ENCODE measurements at regions of chr1 and their contacts with region 1.

Region 1: DNA sequence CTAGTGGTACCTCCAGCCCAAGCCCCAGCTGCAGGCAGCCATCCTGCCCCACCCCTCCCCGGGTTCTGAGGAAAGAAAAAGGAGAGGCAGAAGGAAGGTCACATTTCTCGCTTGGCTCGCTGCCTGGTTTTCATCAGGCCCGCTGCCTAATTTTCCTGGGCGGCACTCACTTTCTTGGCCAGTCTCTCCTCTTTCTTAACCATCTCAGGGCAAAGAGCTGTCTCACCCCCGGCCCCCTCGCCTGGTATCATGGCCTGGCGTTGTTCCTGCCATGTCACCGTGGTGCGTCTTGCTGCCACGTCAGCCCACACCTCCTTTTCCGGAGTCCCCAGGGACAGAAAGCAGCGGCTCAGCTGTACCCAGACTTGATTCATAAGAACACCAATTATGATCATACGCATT is 26.6 kb upstream of the CASZ1 start:
- DNase-seq: no peak
- H3K4me3 ChIP-seq: no peak overlapping the region
- H3K27ac ChIP-seq: no peak overlapping the region
- H3K4me1 ChIP-seq: no peaks in the 10 kb centered on the region
- H3K27me3 ChIP-seq: no peaks in the 10 kb centered on the region
- CTCF ChIP-seq: no peak
- EP300 ChIP-seq: no peak
- POLR2A ChIP-seq: no peak

Region 2: GRCh38 chr1:10686404-10687040 is 136.5 kb before region 1 on chr1:
- intact Hi-C with region 1: loop called in 1 of 4 experiments (anchors 1 kb)
- DNase-seq: peak in 1 of 5 donors; percentile 51
- H3K4me3 ChIP-seq: no peak overlapping the region
- H3K27ac ChIP-seq: peak overlapping the region; percentile 47 to 80
- H3K4me1 ChIP-seq: peaks cover 29% of the 10 kb centered on the region
- H3K27me3 ChIP-seq: no peaks in the 10 kb centered on the region
- CTCF ChIP-seq: no peak
- EP300 ChIP-seq: no peak
- POLR2A ChIP-seq: no peak

Region 3: DNA sequence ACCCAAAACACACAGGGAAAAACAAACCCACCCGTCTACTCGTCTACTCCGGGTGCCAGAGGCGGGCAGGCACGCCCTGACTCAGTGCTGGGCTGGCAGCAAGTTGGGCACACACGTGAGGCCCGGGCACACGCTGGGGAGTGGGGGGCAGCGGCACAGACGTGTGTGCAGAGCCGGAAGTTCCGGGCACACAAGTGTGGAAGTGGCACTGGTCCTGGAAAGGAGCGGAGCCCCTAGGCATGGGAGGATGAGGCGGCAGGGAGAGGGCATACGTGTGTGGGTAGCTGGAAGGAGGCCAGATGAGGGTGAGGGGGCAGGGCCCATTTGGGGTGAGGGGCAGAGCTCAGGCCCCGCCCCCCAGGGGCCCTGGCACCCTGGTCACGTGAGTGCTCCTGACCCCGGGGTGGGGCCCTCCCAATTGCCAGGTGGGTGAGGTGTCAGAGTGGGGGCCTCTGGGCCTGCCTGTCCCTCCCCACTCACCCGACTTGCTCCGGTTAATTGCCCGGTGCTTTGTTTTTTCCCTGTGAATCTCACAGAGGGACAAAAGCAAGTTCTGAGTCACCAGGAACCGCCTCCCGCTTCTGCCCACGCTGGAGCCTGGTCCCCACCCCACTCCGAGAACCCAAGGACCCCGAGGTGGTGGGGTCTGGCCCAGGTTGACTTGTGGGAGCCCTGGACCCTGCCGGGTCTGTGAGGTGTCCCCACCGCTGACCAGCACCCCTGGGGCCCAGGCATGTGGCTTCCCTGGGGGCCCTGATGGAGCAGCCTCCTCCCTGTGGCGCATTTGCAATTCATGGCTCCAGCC is 78.3 kb after region 1 on chr1:
- intact Hi-C with region 1: no loop called
- DNase-seq: no peak
- H3K4me3 ChIP-seq: no peak overlapping the region
- H3K27ac ChIP-seq: no peak overlapping the region
- H3K4me1 ChIP-seq: peaks cover 4% of the 10 kb centered on the region
- H3K27me3 ChIP-seq: no peaks in the 10 kb centered on the region
- CTCF ChIP-seq: no peak
- EP300 ChIP-seq: no peak
- POLR2A ChIP-seq: no peak

Region 4: GRCh38 chr1:11158720-11159321 is 335.8 kb after region 1 on chr1:
- intact Hi-C with region 1: no loop called
- DNase-seq: no peak
- H3K4me3 ChIP-seq: no peak overlapping the region
- H3K27ac ChIP-seq: peak overlapping the region in 1 of 2 donors; percentile 38
- H3K4me1 ChIP-seq: peaks cover 20% of the 10 kb centered on the region
- H3K27me3 ChIP-seq: no peaks in the 10 kb centered on the region
- CTCF ChIP-seq: no peak
- EP300 ChIP-seq: no peak
- POLR2A ChIP-seq: no peak